WTC11 (cell line): ENCODE measurements at regions of chr1 and their contacts with region 1.

Region 1: GRCh38 chr1:112809253-112809684 is 94.1 kb upstream of the PPM1J start:
- DNase-seq: peak; percentile 91
- ATAC-seq: peak; percentile 84
- H3K4me3 Mint-ChIP-seq: peak overlapping the region; percentile 48
- H3K27ac Mint-ChIP-seq: peak overlapping the region; percentile 45
- H3K4me1 Mint-ChIP-seq: peaks cover 89% of the 10 kb centered on the region
- H3K27me3 Mint-ChIP-seq: no peaks in the 10 kb centered on the region
- CTCF ChIP-seq: peak; percentile 66

Region 2: GRCh38 chr1:112660072-112660471 is 149.2 kb before region 1 on chr1:
- CTCF ChIA-PET with region 1: no interaction called
- POLR2A ChIA-PET with region 1: no interaction called
- DNase-seq: no peak
- ATAC-seq: no peak
- H3K4me3 Mint-ChIP-seq: no peak overlapping the region
- H3K27ac Mint-ChIP-seq: no peak overlapping the region
- H3K4me1 Mint-ChIP-seq: no peaks in the 10 kb centered on the region
- H3K27me3 Mint-ChIP-seq: no peaks in the 10 kb centered on the region
- CTCF ChIP-seq: no peak

Region 3: DNA sequence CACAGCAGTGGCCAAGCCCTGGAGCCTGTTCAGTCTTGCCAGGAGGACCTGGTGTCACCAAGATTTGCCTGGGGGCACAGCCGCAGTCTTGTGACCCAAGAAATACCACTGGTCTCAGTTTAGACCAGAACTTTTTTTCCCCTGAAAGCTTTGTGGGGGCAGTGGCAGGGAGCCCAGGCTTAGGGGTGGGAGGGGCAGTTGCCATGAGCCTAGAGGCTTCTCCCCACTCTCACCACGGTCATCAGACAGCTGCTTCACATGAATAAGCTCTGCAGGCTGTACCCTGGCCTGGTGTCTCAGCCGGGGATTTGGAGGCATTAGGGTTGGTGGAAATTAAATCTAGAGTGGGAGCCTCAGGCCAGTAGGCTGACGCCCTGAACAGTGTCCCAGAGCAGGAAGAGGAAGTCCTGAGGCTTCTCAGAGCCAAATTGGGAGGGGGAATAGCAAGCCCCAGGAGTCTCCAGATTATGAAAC is 73.0 kb after region 1 on chr1:
- CTCF ChIA-PET with region 1: interaction called, 20 read pairs
- POLR2A ChIA-PET with region 1: no interaction called
- DNase-seq: no peak
- ATAC-seq: no peak
- H3K4me3 Mint-ChIP-seq: no peak overlapping the region
- H3K27ac Mint-ChIP-seq: no peak overlapping the region
- H3K4me1 Mint-ChIP-seq: peaks cover 53% of the 10 kb centered on the region
- H3K27me3 Mint-ChIP-seq: no peaks in the 10 kb centered on the region
- CTCF ChIP-seq: no peak